SK-N-SH (cell line): ENCODE measurements at regions of chr6 and their contacts with region 1.

Region 1: DNA sequence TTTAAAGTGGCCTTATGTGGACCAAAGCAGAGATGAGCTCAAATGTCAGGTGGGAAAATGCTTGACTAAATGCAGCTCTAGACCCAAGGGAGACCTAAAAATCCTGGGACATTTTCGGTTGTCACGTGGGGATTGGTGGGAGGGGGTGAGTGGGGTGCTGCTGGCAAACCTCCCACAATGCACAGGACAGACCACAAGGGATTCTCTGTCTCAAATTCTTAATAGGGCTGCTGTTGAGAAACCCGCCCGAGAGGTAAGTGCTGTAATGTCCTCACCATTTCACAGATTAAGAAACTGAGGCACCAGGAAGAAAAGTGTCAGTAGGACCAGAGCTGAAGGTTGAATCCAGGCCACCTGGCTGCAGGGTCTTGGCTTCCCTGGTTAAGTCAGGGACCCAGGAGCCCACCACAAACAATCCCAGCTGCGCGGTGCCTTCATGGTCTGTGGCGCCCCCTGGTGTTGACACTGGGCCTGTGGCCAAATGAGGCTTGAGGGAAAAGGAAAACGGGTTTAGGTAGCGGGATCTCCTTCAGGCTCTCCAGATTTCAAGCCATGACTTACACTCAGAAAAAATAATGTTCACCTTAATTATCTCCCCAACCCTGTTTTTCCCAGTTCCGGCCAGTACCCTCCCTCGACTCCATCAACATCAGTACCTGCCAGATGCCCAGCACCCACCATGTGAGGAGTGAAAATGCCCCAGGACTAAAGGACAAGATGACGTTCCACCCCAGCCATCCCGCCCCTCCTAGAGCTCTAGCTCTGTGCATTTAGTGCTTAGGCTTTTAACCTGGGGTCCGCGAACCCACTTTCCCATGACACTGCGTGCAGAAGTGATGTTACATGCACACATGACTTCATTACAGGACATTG is 7.2 kb downstream of the HLA-G start:
- DNase-seq: peak; percentile 41
- H3K4me3 ChIP-seq: peak overlapping the region in 1 of 2 experiments; percentile 31; a peak in 1 of 4 replicates
- H3K27ac ChIP-seq: no peak overlapping the region
- H3K4me1 ChIP-seq: no peaks in the 10 kb centered on the region
- H3K27me3 ChIP-seq: peaks cover 19% of the 10 kb centered on the region
- CTCF ChIP-seq: peak; percentile 75
- EP300 ChIP-seq: no peak
- RAD21 ChIP-seq: peak; percentile 73

Region 2: GRCh38 chr6:29752451-29753308 is 82.1 kb before region 1 on chr6:
- CTCF ChIA-PET with region 1: interaction called, 13 read pairs
- POLR2A ChIA-PET with region 1: no interaction called
- DNase-seq: peak; percentile 77
- H3K4me3 ChIP-seq: peak overlapping the region; percentile 48 to 66
- H3K27ac ChIP-seq: no peak overlapping the region
- H3K4me1 ChIP-seq: peaks cover 0 to 12% of the 10 kb centered on the region in 2 experiments; a peak in 1 of 4 replicates
- H3K27me3 ChIP-seq: peaks cover 55% of the 10 kb centered on the region; the same call in 1 of the 2 replicates
- CTCF ChIP-seq: peak; percentile 85
- EP300 ChIP-seq: no peak
- RAD21 ChIP-seq: peak; percentile 56